Activated CD4-positive, alpha-beta T cell treated with anti-CD3 and anti-CD28 coated beads for 36 hours (primary cell): ENCODE measurements at regions of chr14 and their contacts with region 1.

Region 1: GRCh38 chr14:104137297-104138097 is 890 bp upstream of the KIF26A start:
- DNase-seq: peak; percentile 84
- ATAC-seq: peak; percentile 83
- H3K4me3 Mint-ChIP-seq: peak overlapping the region; percentile 36
- H3K27ac Mint-ChIP-seq: no peak overlapping the region
- H3K4me1 Mint-ChIP-seq: peaks cover 4% of the 10 kb centered on the region
- H3K27me3 Mint-ChIP-seq: peaks cover 26% of the 10 kb centered on the region

Region 2: DNA sequence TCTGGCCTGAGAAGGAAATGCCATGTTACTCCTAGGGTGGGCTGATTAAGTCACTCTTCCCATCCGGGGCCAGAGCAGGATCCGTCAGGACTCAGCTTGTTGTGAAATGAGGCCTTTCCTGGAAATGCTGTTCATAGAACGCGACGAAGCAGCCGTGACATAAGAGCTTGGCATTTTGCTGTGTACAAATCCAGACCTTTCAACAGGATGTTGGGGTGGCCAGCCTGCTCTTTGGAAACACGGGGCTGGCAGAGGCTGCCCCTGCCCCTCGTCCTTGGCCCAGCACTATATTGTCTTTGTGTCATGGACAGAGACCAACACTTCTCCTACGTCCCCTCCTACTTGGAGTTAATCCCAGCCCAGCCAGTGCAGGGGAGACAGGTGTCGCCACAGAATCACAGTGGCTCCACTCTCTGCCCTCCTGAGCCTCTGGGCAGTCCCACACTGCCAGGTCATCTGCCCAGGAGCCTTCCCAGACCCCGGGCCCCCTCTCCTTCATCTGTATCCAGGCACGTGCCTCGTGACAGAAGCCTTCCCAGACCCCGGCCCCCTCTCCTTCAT is 822.1 kb before region 1 on chr14:
- CTCF ChIA-PET with region 1: no interaction called
- POLR2A ChIA-PET with region 1: no interaction called
- intact Hi-C with region 1: no loop called
- DNase-seq: no peak
- ATAC-seq: no peak
- H3K4me3 Mint-ChIP-seq: no peak overlapping the region
- H3K27ac Mint-ChIP-seq: no peak overlapping the region
- H3K4me1 Mint-ChIP-seq: no peaks in the 10 kb centered on the region
- H3K27me3 Mint-ChIP-seq: peaks cover 7% of the 10 kb centered on the region

Region 3: GRCh38 chr14:104224506-104225277 is 87.2 kb after region 1 on chr14:
- CTCF ChIA-PET with region 1: no interaction called
- POLR2A ChIA-PET with region 1: no interaction called
- intact Hi-C with region 1: loop called in 1 of 2 experiments (anchors 1 kb)
- DNase-seq: peak; percentile 69
- ATAC-seq: no peak
- H3K4me3 Mint-ChIP-seq: no peak overlapping the region
- H3K27ac Mint-ChIP-seq: no peak overlapping the region
- H3K4me1 Mint-ChIP-seq: peaks cover 17% of the 10 kb centered on the region
- H3K27me3 Mint-ChIP-seq: peaks cover 12% of the 10 kb centered on the region

Region 4: GRCh38 chr14:104341532-104342434 is 204.3 kb after region 1 on chr14:
- CTCF ChIA-PET with region 1: no interaction called
- POLR2A ChIA-PET with region 1: no interaction called
- intact Hi-C with region 1: loop called in 1 of 2 experiments (anchors 1 kb)
- DNase-seq: peak; percentile 77
- ATAC-seq: peak; percentile 90
- H3K4me3 Mint-ChIP-seq: no peak overlapping the region
- H3K27ac Mint-ChIP-seq: no peak overlapping the region
- H3K4me1 Mint-ChIP-seq: no peaks in the 10 kb centered on the region
- H3K27me3 Mint-ChIP-seq: peaks cover 6% of the 10 kb centered on the region

Region 5: DNA sequence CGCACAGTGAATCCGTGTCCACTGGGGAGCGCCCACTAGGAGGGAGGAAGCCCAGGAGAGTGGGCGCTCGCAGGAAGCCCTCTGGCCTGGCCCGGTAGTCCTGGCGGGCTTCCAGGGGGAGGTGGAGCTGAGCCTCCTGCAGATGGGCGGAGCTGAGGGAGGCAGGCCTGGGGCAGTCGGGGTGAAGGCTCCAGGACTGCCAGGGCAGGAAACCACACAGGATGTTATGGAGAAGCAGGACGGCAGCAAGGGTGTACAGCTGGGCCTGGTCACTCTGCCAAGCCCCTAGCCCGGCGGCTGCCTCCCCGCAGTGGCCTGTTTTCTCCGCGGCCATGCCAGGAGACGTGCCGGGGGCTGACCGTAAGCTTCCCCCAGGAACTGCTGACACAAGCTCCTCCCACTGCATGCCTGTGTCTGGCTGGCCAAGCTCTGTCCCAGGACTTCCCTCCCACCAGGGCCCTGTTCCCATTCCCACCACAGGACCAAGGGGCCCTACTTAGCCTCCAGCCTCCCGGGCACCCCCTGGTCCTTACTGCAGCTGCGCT is 298.6 kb after region 1 on chr14:
- CTCF ChIA-PET with region 1: no interaction called
- POLR2A ChIA-PET with region 1: no interaction called
- intact Hi-C with region 1: no loop called
- DNase-seq: no peak
- ATAC-seq: no peak
- H3K4me3 Mint-ChIP-seq: no peak overlapping the region
- H3K27ac Mint-ChIP-seq: no peak overlapping the region
- H3K4me1 Mint-ChIP-seq: no peaks in the 10 kb centered on the region
- H3K27me3 Mint-ChIP-seq: no peaks in the 10 kb centered on the region

Region 6: GRCh38 chr14:104563742-104564615 is 426.5 kb after region 1 on chr14:
- CTCF ChIA-PET with region 1: no interaction called
- POLR2A ChIA-PET with region 1: no interaction called
- intact Hi-C with region 1: loop called (anchors 1 to 5 kb)
- DNase-seq: peak; percentile 82
- ATAC-seq: peak; percentile 60
- H3K4me3 Mint-ChIP-seq: no peak overlapping the region
- H3K27ac Mint-ChIP-seq: no peak overlapping the region
- H3K4me1 Mint-ChIP-seq: no peaks in the 10 kb centered on the region
- H3K27me3 Mint-ChIP-seq: peaks cover 7% of the 10 kb centered on the region

Region 7: DNA sequence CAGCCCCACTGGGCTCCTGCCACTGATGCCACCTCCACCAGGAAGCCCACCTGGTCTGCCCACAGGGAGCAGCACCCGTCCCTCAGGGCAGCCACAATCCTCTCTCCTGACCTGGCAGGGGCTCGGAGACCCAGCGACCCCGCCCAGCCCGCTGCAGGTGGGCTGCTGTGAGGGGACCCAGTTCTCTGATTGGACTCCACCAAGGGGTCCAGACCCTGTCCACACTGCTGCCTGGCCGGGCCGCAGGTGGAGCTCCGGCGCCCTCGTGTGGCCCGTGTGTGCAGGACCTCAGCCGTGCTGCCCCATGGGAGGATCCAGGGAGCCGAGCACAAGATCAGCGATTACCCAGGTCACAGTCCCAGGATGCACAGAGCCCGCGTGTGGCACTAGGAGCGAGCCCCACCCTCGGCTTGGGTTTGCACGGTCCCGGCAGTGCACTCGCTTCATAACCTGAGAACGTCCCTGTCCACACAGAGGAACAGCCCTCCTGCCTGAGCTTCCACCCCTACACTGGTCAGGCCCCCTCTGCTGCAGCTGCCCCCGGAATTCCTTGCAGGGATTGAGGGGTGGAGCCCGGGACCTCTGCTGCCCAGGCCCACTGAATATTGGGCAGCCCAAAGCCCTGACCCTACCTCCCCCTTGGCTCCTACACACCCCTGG is 502.5 kb after region 1 on chr14:
- CTCF ChIA-PET with region 1: no interaction called
- POLR2A ChIA-PET with region 1: no interaction called
- intact Hi-C with region 1: loop called (anchors 1 to 5 kb)
- DNase-seq: peak; percentile 76
- ATAC-seq: peak; percentile 93
- H3K4me3 Mint-ChIP-seq: no peak overlapping the region
- H3K27ac Mint-ChIP-seq: no peak overlapping the region
- H3K4me1 Mint-ChIP-seq: peaks cover 5% of the 10 kb centered on the region
- H3K27me3 Mint-ChIP-seq: peaks cover 8% of the 10 kb centered on the region